GM10248 (cell line): ENCODE measurements at regions of chr6 and their contacts with region 1.

Region 1: DNA sequence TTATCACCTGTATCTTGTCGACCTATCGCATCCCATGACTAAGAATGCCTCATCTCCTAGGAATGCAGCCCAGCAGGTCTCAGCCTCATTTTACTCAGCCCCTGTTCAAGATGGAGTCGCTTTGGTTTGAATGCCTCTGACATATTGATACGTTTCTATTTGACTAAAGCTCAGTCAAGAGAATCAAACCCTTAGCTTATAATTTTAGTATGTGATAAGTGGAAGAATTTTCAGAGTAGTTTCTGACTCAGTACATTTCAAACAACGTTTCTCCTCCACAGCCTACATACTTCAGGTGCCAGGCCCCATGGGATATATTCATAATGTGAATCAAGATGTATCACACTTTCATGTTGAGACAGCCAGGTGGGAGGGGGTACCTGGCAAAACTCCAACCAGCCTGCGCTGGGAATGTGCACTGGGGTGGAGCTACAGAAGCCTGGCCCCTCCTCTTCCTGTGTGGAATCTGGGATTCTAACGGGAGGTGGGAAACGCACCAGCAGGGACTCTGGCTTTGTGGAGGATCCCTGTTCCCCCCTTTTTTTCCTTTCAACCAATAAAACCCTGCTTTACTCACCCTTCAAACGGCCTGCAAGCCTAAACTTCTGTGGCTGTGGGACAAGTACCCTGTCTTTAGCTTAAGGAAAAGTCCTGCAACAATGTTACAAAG is 6.8 kb upstream of the SEC63 start:
- DNase-seq: no peak
- CTCF ChIP-seq: no peak

Region 2: GRCh38 chr6:107982486-107982885 is 17.7 kb after region 1 on chr6:
- CTCF ChIA-PET with region 1: interaction called, 12 read pairs
- POLR2A ChIA-PET with region 1: no interaction called
- DNase-seq: no peak
- CTCF ChIP-seq: no peak

Region 3: GRCh38 chr6:108423982-108424705 is 459.3 kb after region 1 on chr6:
- CTCF ChIA-PET with region 1: no interaction called
- POLR2A ChIA-PET with region 1: no interaction called
- DNase-seq: no peak
- CTCF ChIP-seq: no peak